PC-9 (cell line): ENCODE measurements at regions of chr2 and their contacts with region 1.

Region 1: GRCh38 chr2:10812362-10813162 is at the start of gene PDIA6:
- DNase-seq: peak; percentile 90 to 98
- H3K4me3 ChIP-seq: peak within 1 kb of the TSS; percentile 69
- H3K27ac ChIP-seq: peak within 1 kb of the TSS; percentile 81
- H3K4me1 ChIP-seq: peaks cover 19% of the 10 kb centered on the region
- H3K27me3 ChIP-seq: peaks cover 9% of the 10 kb centered on the region
- CTCF ChIP-seq: no peak
- total RNA-seq, gene PDIA6: 127 and 170 TPM in 2 replicates

Region 2: GRCh38 chr2:10538224-10538894 is 274.2 kb before region 1 on chr2:
- CTCF ChIA-PET with region 1: no interaction called
- POLR2A ChIA-PET with region 1: no interaction called
- intact Hi-C with region 1: loop called (anchors 5 kb)
- DNase-seq: peak; percentile 41 to 92
- H3K4me3 ChIP-seq: no peak overlapping the region
- H3K27ac ChIP-seq: no peak overlapping the region
- H3K4me1 ChIP-seq: peaks cover 11% of the 10 kb centered on the region
- H3K27me3 ChIP-seq: no peaks in the 10 kb centered on the region
- CTCF ChIP-seq: no peak

Region 3: GRCh38 chr2:10977003-10977402 is 164.4 kb after region 1 on chr2:
- CTCF ChIA-PET with region 1: no interaction called
- POLR2A ChIA-PET with region 1: interaction called, 17 read pairs
- intact Hi-C with region 1: no loop called
- DNase-seq: no peak
- H3K4me3 ChIP-seq: no peak overlapping the region
- H3K27ac ChIP-seq: no peak overlapping the region
- H3K4me1 ChIP-seq: no peaks in the 10 kb centered on the region
- H3K27me3 ChIP-seq: no peaks in the 10 kb centered on the region
- CTCF ChIP-seq: no peak